Activated naive CD8-positive, alpha-beta T cell treated with anti-CD3 and anti-CD28 coated beads, Interleukin-2, amount 10 ng/mL, durations not matched to agents 7 days and 5 days (primary cell): ENCODE measurements at regions of chr3 and their contacts with region 1.

Region 1: GRCh38 chr3:32460031-32460749 is 42.5 kb downstream of the CMTM6 start:
- DNase-seq: peak; percentile 77
- ATAC-seq: peak; percentile 81
- H3K4me3 Mint-ChIP-seq: peak overlapping the region; percentile 86
- H3K27ac Mint-ChIP-seq: no peak overlapping the region
- H3K4me1 Mint-ChIP-seq: peaks cover 39% of the 10 kb centered on the region
- H3K27me3 Mint-ChIP-seq: no peaks in the 10 kb centered on the region

Region 2: GRCh38 chr3:32414520-32415202 is 45.5 kb before region 1 on chr3:
- POLR2A ChIA-PET with region 1: interaction called, 23 read pairs
- DNase-seq: no peak
- ATAC-seq: peak; percentile 95
- H3K4me3 Mint-ChIP-seq: peak overlapping the region; percentile 41
- H3K27ac Mint-ChIP-seq: peak overlapping the region; percentile 77
- H3K4me1 Mint-ChIP-seq: peaks cover 48% of the 10 kb centered on the region
- H3K27me3 Mint-ChIP-seq: no peaks in the 10 kb centered on the region

Region 3: DNA sequence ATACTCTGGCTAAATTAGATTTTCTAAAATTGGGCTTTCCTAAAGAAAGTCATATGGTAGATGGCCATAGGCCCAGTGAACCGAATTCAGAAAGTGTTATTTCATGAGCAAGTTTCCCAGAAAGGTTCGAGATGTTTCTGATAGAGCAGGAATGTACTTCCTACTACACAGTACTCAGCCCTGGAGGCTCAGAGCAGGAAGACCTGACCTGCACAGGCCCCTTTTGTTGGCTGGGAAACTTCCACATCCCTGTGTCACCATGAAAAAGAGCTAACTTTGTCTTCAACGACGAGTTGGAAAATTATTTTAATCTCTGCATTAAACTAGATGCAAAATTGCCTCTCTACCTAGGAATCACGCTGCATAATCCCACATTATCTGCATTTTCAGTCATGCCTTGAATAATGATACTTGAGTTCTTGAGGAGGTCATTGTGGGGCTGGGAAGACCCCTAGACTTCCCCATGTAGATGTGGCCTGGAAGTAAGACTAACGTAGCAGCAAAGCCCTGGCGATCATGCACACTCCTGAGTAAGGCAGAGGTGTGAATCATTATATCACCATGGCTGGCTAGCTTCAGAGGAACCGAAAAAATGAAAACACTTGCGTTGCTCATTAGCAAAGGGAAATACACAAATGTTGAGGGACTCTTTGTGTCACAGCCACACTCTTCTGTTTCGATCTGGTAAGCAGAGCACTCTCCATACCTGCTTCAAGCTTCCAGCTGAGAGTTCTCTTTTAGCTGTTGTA is 21.4 kb before region 1 on chr3:
- POLR2A ChIA-PET with region 1: interaction called, 112 read pairs
- DNase-seq: no peak
- ATAC-seq: peak; percentile 31
- H3K4me3 Mint-ChIP-seq: peak overlapping the region; percentile 54
- H3K27ac Mint-ChIP-seq: peak overlapping the region; percentile 91
- H3K4me1 Mint-ChIP-seq: peaks cover 51% of the 10 kb centered on the region
- H3K27me3 Mint-ChIP-seq: no peaks in the 10 kb centered on the region

Region 4: DNA sequence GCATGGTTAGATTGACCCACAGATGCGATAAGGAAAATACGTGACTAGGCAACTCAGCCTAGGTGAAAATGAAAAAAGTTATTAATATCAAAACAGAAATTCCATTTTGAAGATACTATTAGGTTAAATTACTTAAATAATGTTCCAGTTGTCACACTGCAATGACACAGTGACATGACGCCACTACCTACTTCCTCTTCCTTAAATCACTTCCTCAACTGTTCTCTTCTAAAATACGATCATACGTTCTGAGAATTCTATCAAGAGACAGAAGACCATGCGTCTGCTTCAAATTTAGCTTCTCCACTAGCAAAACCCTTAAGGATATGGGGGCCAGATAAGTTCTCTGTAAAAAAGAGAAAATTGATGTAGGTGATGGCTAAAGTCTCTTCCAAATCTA is 24.2 kb after region 1 on chr3:
- POLR2A ChIA-PET with region 1: no interaction called
- DNase-seq: no peak
- ATAC-seq: no peak
- H3K4me3 Mint-ChIP-seq: peak overlapping the region; percentile 23
- H3K27ac Mint-ChIP-seq: no peak overlapping the region
- H3K4me1 Mint-ChIP-seq: peaks cover 13% of the 10 kb centered on the region
- H3K27me3 Mint-ChIP-seq: no peaks in the 10 kb centered on the region

Region 5: DNA sequence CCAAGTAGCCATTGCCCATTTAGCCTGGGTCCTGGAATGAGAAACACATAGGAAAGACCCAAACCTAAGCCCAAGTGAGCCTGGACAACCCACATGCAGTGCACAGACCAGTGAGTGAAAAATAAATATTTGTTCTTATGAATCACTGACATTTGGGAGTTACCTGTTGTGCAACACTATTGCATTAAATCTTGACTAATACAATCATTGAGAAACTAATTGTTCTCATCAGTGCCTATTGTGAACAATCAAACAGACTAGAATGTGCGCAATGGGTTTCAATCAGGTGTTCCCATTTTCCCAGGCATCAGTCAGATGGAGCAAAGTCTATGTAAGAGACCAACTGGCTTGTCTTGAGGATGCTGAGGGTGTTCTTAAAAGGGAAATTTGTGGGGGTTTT is 170.1 kb after region 1 on chr3:
- POLR2A ChIA-PET with region 1: no interaction called
- DNase-seq: no peak
- ATAC-seq: no peak
- H3K4me3 Mint-ChIP-seq: no peak overlapping the region
- H3K27ac Mint-ChIP-seq: no peak overlapping the region
- H3K4me1 Mint-ChIP-seq: no peaks in the 10 kb centered on the region
- H3K27me3 Mint-ChIP-seq: peaks cover 14% of the 10 kb centered on the region